HepG2 (cell line): ENCODE measurements at regions of chr6 and their contacts with region 1.

Region 1: DNA sequence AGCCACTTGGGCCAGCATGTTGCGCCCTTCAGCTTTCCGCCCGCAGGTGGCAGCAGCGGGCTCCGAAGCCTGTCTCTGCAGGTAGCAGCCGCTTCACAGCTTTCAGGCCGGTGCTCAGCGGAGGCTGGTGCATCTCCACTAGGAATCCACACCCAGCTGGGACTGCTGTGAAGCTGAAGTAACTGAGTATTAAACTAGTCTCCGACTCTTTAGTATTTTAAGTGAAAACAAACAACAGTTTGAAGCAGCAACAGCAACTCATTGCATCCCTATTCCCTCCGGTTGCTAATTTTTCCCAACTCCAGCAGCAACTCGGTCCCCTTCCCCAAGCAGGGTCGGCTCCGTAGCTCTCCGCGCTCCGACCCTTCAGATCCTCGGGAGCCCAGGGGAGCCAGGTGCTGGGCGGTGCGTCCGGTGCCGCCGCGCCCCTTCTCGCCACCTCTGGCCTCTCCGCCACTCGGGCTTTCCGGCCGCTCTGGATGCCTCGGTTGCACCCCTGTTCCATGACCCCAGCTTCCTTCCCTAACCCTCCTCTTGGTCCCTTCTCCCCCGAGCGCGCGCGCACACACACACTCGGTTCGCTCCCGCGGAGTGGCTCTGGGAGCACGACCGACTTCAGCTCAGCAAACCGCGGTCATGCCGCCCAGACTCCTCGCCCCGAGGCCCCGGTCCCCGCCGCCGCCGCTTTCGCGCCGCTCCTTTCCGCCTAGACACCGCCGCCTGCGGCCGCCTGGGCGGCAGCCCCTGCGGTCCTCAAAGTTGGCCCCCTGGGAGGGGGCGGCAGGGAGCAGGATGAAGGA is 768 bp upstream of the NKAIN2 start:
- DNase-seq: peak; percentile 57
- ATAC-seq: peak; percentile 99
- H3K4me3 ChIP-seq: peak overlapping the region in 1 of 3 experiments; percentile 41; a peak in 1 of 6 replicates
- H3K27ac ChIP-seq: no peak overlapping the region
- H3K4me1 ChIP-seq: no peaks in the 10 kb centered on the region
- H3K27me3 ChIP-seq: peaks cover 0 to 24% of the 10 kb centered on the region in 2 experiments; a peak in 3 of 5 replicates
- CTCF ChIP-seq: peak; percentile 91
- EP300 ChIP-seq: no peak
- POLR2A ChIP-seq: no peak
- RAD21 ChIP-seq: peak; percentile 88

Region 2: GRCh38 chr6:123777563-123777962 is 25.3 kb before region 1 on chr6:
- CTCF ChIA-PET with region 1: no interaction called
- POLR2A ChIA-PET with region 1: no interaction called
- in situ Hi-C with region 1: no loop called
- intact Hi-C with region 1: no loop called
- DNase-seq: no peak
- ATAC-seq: no peak
- H3K4me3 ChIP-seq: no peak overlapping the region
- H3K27ac ChIP-seq: no peak overlapping the region
- H3K4me1 ChIP-seq: no peaks in the 10 kb centered on the region
- H3K27me3 ChIP-seq: no peaks in the 10 kb centered on the region; a peak in 1 of 5 replicates
- CTCF ChIP-seq: no peak
- EP300 ChIP-seq: no peak
- POLR2A ChIP-seq: no peak
- RAD21 ChIP-seq: no peak

Region 3: GRCh38 chr6:123879749-123880148 is 76.9 kb after region 1 on chr6:
- CTCF ChIA-PET with region 1: no interaction called
- POLR2A ChIA-PET with region 1: no interaction called
- in situ Hi-C with region 1: no loop called
- intact Hi-C with region 1: loop called (anchors 2 kb)
- DNase-seq: no peak
- ATAC-seq: no peak
- H3K4me3 ChIP-seq: no peak overlapping the region
- H3K27ac ChIP-seq: no peak overlapping the region
- H3K4me1 ChIP-seq: no peaks in the 10 kb centered on the region
- H3K27me3 ChIP-seq: no peaks in the 10 kb centered on the region
- CTCF ChIP-seq: no peak
- EP300 ChIP-seq: no peak
- POLR2A ChIP-seq: no peak
- RAD21 ChIP-seq: no peak

Region 4: GRCh38 chr6:123965894-123966293 is 163.0 kb after region 1 on chr6:
- CTCF ChIA-PET with region 1: interaction called, 4 read pairs
- POLR2A ChIA-PET with region 1: no interaction called
- in situ Hi-C with region 1: no loop called
- intact Hi-C with region 1: loop called (anchors 1 kb)
- DNase-seq: peak; percentile 35
- ATAC-seq: peak; percentile 88
- H3K4me3 ChIP-seq: no peak overlapping the region
- H3K27ac ChIP-seq: no peak overlapping the region
- H3K4me1 ChIP-seq: no peaks in the 10 kb centered on the region
- H3K27me3 ChIP-seq: no peaks in the 10 kb centered on the region
- CTCF ChIP-seq: peak; percentile 37
- EP300 ChIP-seq: no peak
- POLR2A ChIP-seq: no peak
- RAD21 ChIP-seq: no peak

Region 5: DNA sequence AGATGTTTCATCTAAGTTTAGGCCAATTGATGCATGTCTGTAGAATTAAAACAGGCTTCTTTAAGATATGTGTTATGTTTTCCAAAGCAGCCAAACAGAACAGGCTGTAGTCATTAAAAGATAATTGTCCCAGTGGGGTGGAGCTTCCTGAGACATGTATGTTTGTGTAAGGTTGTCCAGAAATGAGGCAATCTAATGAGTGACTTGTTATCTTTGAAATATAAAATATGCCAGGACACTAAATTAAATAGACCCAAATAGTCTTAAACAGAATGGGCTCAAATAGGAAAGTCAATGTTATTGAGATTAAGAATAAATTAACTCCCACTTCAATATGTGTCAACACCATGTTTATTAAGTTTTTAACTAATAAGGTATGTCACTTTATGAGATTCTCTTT is 954.7 kb after region 1 on chr6:
- CTCF ChIA-PET with region 1: no interaction called
- POLR2A ChIA-PET with region 1: no interaction called
- in situ Hi-C with region 1: no loop called
- intact Hi-C with region 1: loop called (anchors 5 kb)
- DNase-seq: no peak
- ATAC-seq: no peak
- H3K4me3 ChIP-seq: no peak overlapping the region
- H3K27ac ChIP-seq: no peak overlapping the region
- H3K4me1 ChIP-seq: no peaks in the 10 kb centered on the region
- H3K27me3 ChIP-seq: no peaks in the 10 kb centered on the region
- CTCF ChIP-seq: no peak
- EP300 ChIP-seq: no peak
- POLR2A ChIP-seq: no peak
- RAD21 ChIP-seq: no peak

Region 6: DNA sequence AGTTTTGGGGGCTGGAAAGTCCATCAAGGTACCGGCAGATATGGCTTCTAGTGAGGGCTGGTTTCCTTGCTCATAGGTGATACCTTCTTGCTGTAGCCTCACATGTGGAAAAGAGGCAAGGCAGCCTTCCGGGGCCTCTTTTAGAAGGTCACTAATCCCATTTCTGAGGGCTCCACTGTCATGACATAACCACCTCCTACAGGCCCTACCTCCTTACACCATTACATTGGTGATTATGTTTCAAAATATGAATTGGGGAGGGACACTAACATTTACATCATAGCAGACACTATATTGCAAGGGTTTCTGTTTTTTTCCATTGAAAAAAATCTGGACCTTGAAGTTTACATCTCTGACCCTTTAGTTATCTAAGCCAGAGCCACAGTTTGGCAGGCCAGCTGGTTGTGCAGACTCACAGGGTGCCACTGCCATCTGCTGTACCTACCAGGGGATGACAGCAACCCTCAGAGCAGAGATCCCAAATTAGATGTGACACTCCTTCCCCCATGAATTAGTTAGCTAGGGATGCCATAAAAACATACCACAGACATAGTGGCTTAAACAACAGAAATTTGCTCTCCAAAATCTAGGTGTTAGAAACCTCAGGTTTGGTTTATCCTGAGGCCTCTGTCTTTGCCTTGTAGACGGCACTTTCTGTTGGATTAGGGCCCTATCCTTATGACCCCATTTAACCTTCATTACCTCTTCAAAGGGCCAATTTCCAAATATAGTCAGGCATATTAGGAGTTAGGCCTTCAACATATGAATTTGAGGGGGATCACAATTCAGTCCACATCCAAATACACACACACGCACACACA is 993.0 kb after region 1 on chr6:
- CTCF ChIA-PET with region 1: no interaction called
- POLR2A ChIA-PET with region 1: no interaction called
- in situ Hi-C with region 1: loop called (anchors 25 kb)
- intact Hi-C with region 1: loop called (anchors 1 kb)
- DNase-seq: no peak
- ATAC-seq: peak; percentile 87
- H3K4me3 ChIP-seq: no peak overlapping the region
- H3K27ac ChIP-seq: no peak overlapping the region
- H3K4me1 ChIP-seq: no peaks in the 10 kb centered on the region
- H3K27me3 ChIP-seq: no peaks in the 10 kb centered on the region; a peak in 1 of 5 replicates
- CTCF ChIP-seq: peak; percentile 69
- EP300 ChIP-seq: no peak
- POLR2A ChIP-seq: no peak
- RAD21 ChIP-seq: peak; percentile 26; the same call in 1 of the 2 replicates

Region 7: GRCh38 chr6:124854338-124854922 is 1051.5 kb after region 1 on chr6:
- CTCF ChIA-PET with region 1: interaction called, 5 read pairs
- POLR2A ChIA-PET with region 1: no interaction called
- in situ Hi-C with region 1: no loop called
- intact Hi-C with region 1: loop called (anchors 1 kb)
- DNase-seq: no peak
- ATAC-seq: no peak
- H3K4me3 ChIP-seq: no peak overlapping the region
- H3K27ac ChIP-seq: no peak overlapping the region
- H3K4me1 ChIP-seq: no peaks in the 10 kb centered on the region
- H3K27me3 ChIP-seq: no peaks in the 10 kb centered on the region; a peak in 1 of 5 replicates
- CTCF ChIP-seq: no peak
- EP300 ChIP-seq: no peak
- POLR2A ChIP-seq: no peak
- RAD21 ChIP-seq: no peak

Region 8: GRCh38 chr6:125114248-125114858 is 1311.5 kb after region 1 on chr6:
- CTCF ChIA-PET with region 1: interaction called, 4 read pairs
- POLR2A ChIA-PET with region 1: no interaction called
- in situ Hi-C with region 1: no loop called
- intact Hi-C with region 1: loop called (anchors 2 kb)
- DNase-seq: peak; percentile 43
- ATAC-seq: no peak
- H3K4me3 ChIP-seq: no peak overlapping the region
- H3K27ac ChIP-seq: no peak overlapping the region
- H3K4me1 ChIP-seq: no peaks in the 10 kb centered on the region
- H3K27me3 ChIP-seq: no peaks in the 10 kb centered on the region
- CTCF ChIP-seq: peak; percentile 58
- EP300 ChIP-seq: no peak
- POLR2A ChIP-seq: no peak
- RAD21 ChIP-seq: no peak